ENCODE measurements at regions of chr5 and their contacts with region 1.

Region 1: DNA sequence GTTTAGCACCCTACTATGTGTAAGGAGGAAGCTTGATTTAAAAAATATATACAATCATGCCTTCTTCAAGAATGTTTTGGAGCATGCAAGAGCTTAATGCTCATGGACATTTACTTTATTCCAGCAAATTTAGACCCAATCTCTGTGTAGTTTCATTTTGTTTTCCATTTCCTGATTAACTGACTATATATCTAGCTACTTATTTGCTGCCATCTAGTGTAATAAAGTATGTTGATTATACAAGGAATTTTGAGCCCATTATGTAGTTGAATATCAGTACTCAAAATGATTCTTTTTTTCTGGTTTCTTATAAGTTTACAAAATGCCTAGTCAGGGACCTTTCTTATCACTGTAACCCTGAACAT is 100.0 kb upstream of the CCDC152 start:
- DNase-seq: no peak
- ATAC-seq: peak; percentile 53 to 76

Region 2: GRCh38 chr5:42005561-42006153 is 651.0 kb before region 1 on chr5:
- intact Hi-C with region 1: loop called in 1 of 2 experiments (anchors 5 kb)
- DNase-seq: no peak
- ATAC-seq: no peak

Region 3: GRCh38 chr5:42423285-42424165 is 233.1 kb before region 1 on chr5 and contains the start of gene GHR:
- intact Hi-C with region 1: loop called in 1 of 2 experiments (anchors 10 kb)
- DNase-seq: peak; percentile 86
- ATAC-seq: peak; percentile 93 to 94
- total RNA-seq, gene GHR: 15.2 to 22.4 TPM

Region 4: GRCh38 chr5:42583322-42583721 is 73.3 kb before region 1 on chr5:
- intact Hi-C with region 1: loop called in 1 of 2 experiments (anchors 10 kb)
- DNase-seq: peak; percentile 44
- ATAC-seq: peak; percentile 49 to 67

Region 5: GRCh38 chr5:42701351-42702059 is 44.9 kb after region 1 on chr5:
- intact Hi-C with region 1: no loop called
- DNase-seq: no peak
- ATAC-seq: no peak

Region 6: DNA sequence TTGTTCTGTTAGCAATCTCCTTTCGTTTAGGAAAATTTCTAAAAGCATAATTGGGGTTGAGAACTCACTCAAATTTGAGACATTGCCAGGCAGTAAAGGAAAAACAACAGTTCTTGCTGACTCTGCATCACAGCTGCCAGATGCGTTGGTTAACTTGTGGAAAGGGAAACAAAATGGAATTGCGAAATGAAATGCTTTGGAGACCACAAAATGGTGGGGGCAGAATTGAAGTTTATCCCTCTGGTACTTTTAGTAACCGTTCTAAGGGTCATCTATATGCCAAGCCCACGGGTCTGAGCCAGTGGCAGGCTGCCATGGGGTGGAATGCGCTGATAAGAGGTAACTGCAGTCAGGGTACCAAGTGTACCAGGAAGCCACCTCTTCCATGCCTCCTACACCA is 183.6 kb after region 1 on chr5:
- intact Hi-C with region 1: no loop called
- DNase-seq: peak; percentile 57
- ATAC-seq: peak; percentile 66 to 80